Upper lobe of right lung (tissue), 1 donor: ENCODE measurements at regions of chr1 and their contacts with region 1.

Region 1: DNA sequence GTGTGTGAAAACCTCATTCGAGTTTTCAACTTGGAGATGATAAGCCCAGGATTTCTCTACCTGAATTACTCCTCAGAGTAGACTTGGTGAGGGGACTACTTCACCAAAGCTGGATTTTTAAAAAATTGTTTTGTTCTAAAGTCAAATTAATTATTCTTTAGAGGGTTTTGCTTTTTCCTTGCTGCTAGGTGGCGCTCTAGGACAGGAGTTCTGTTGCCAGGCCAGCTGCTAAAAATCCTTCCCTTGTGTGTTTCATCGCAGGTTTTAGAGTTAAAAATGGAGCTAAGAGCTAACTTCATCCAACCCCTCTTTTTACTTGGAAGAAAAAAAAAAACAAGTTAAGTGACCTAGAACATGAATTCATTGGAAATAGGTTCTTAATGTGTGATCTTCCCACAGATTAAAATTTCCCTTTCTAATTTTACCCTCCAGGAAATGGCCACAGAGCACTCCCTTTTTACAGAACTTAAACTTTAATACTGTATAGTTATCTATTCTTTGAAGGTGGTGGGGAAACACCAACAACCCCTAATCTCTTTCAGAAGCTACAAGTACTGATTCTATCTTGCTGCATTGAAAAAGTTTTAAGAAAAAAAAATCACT is 36.7 kb upstream of the FAM163A start:
- DNase-seq: no peak
- ATAC-seq: peak; percentile 49
- H3K4me3 ChIP-seq: no peak overlapping the region
- H3K27ac ChIP-seq: no peak overlapping the region
- H3K4me1 ChIP-seq: peaks cover 4% of the 10 kb centered on the region
- H3K27me3 ChIP-seq: no peaks in the 10 kb centered on the region
- CTCF ChIP-seq: peak; percentile 66

Region 2: GRCh38 chr1:179251675-179252074 is 454.8 kb before region 1 on chr1:
- intact Hi-C with region 1: no loop called
- DNase-seq: no peak
- ATAC-seq: peak; percentile 79
- H3K4me3 ChIP-seq: no peak overlapping the region
- H3K27ac ChIP-seq: no peak overlapping the region
- H3K4me1 ChIP-seq: no peaks in the 10 kb centered on the region
- H3K27me3 ChIP-seq: no peaks in the 10 kb centered on the region
- CTCF ChIP-seq: peak; percentile 51

Region 3: DNA sequence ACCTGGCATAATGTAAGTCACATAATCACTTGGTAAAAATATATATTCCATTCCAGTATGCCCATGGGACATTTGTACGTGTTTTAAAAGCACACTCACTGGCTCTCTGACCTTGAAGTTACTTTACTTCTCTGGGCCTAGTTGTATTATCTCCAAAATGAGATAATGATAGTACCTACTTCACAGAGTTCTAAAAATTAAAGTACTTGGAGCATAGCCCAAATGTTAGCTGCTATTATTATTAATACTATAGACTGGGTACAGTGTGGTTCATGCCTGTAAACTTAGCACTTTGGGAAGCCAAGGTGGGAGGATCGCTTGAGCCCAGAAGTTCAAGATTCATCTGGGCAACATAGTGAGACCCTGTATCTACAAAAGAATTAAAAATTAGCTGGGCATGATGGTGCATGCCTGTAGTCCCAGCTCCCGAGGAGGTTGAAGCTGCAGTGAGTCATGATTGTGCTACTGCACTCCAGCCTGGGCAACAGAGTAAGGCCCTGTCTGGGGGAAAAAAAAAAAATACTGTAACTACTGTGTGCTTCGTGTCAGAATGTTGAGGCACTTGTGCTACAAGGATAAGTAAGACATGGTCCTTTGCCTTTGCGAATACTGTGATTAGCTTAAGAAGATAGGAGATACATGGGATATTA is 69.1 kb before region 1 on chr1:
- intact Hi-C with region 1: no loop called
- DNase-seq: no peak
- ATAC-seq: no peak
- H3K4me3 ChIP-seq: no peak overlapping the region
- H3K27ac ChIP-seq: no peak overlapping the region
- H3K4me1 ChIP-seq: no peaks in the 10 kb centered on the region
- H3K27me3 ChIP-seq: no peaks in the 10 kb centered on the region
- CTCF ChIP-seq: no peak

Region 4: DNA sequence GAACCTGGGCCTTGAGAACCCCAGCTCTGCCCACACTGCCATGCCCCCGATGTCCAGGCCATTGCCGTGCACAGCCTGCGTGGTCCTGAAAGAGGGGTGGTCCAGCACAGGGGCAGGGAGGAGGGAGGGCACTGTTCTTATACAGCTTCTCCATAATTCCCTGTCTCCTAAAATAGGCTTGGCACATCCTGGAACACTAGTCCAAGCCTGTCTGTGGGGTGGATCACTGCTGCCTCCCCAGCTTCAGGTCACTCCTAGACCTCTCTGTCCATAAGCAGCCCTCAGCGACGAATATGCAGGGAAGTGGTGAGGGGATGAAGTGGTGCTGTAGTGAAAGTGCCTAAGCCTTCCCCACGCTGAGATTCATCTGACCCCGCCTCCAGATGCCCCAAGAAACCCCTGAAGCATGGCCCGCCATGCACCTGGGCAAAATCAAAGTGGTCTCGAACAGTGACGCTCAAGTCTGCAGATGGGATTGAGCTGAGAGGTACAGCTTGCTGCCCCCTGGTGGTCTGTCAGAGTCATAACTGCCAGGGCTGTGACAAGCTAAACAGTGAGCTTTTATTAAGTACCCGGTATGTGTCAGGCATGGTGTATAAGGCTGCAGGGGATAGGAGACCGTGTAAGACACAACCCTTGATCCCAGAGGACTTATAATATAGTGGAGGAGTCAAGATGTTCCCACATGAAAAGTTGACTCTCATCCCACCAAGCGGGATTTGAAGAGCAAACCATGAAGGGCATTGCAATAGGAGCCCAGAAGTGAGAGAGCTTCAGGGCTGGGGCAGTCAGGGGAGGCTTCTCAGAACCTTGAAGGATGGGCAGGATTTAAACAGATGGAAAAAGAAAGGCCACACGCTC is 103.3 kb after region 1 on chr1:
- intact Hi-C with region 1: loop called (anchors 5 kb)
- DNase-seq: no peak
- ATAC-seq: peak; percentile 80
- H3K4me3 ChIP-seq: no peak overlapping the region
- H3K27ac ChIP-seq: no peak overlapping the region
- H3K4me1 ChIP-seq: peaks cover 7% of the 10 kb centered on the region
- H3K27me3 ChIP-seq: no peaks in the 10 kb centered on the region
- CTCF ChIP-seq: peak; percentile 91